PC-9 (cell line): ENCODE measurements at regions of chr12 and their contacts with region 1.

Region 1: GRCh38 chr12:77954206-77954555 is 123.5 kb downstream of the NAV3 start:
- DNase-seq: no peak
- H3K4me3 ChIP-seq: no peak overlapping the region
- H3K27ac ChIP-seq: no peak overlapping the region
- H3K4me1 ChIP-seq: no peaks in the 10 kb centered on the region
- H3K27me3 ChIP-seq: no peaks in the 10 kb centered on the region
- CTCF ChIP-seq: no peak

Region 2: DNA sequence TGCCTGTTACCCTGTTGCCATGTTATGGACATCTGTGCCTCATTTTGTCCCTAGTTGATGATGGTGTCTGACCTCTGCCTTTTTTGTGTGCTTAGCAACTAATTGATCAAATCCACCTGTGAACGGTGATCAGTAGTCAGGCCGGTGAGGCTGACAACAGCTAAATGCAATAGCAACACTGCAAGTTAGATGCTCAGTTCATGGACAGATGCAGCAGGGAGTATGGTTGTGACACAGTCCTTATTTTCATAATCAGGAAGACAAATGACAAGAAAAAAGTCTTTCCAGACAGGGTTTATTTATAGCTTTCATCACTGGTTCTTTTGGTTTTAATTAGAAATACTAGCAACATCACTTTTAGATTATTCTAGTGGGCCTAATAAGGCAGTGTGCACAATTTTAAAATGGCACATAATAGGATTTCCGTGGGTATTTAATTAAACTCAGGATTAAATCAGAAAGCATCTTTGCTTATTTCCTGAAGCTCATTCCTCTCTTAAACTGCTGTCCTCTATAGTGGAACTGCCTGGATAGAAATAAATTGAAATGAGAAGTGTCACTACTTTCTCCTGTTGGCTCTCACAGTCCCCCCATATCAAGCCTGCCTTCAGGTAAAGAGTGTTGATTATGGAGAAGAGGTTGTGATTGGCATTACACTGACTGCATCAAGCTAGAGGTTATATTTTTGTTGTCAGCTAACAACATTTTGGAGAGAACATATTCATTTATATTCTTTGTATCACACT is 404.6 kb before region 1 on chr12:
- CTCF ChIA-PET with region 1: no interaction called
- POLR2A ChIA-PET with region 1: interaction called, 14 read pairs
- intact Hi-C with region 1: no loop called
- DNase-seq: no peak
- H3K4me3 ChIP-seq: no peak overlapping the region
- H3K27ac ChIP-seq: no peak overlapping the region
- H3K4me1 ChIP-seq: no peaks in the 10 kb centered on the region
- H3K27me3 ChIP-seq: no peaks in the 10 kb centered on the region
- CTCF ChIP-seq: no peak

Region 3: GRCh38 chr12:77882709-77883108 is 71.5 kb before region 1 on chr12:
- CTCF ChIA-PET with region 1: no interaction called
- POLR2A ChIA-PET with region 1: interaction called, 12 read pairs
- intact Hi-C with region 1: no loop called
- DNase-seq: no peak
- H3K4me3 ChIP-seq: no peak overlapping the region
- H3K27ac ChIP-seq: no peak overlapping the region
- H3K4me1 ChIP-seq: no peaks in the 10 kb centered on the region
- H3K27me3 ChIP-seq: no peaks in the 10 kb centered on the region
- CTCF ChIP-seq: no peak

Region 4: GRCh38 chr12:77914081-77914488 is 40.1 kb before region 1 on chr12:
- CTCF ChIA-PET with region 1: no interaction called
- POLR2A ChIA-PET with region 1: no interaction called
- intact Hi-C with region 1: no loop called
- DNase-seq: no peak
- H3K4me3 ChIP-seq: no peak overlapping the region
- H3K27ac ChIP-seq: no peak overlapping the region
- H3K4me1 ChIP-seq: no peaks in the 10 kb centered on the region
- H3K27me3 ChIP-seq: no peaks in the 10 kb centered on the region
- CTCF ChIP-seq: no peak

Region 5: GRCh38 chr12:78385541-78385940 is 431.4 kb after region 1 on chr12:
- CTCF ChIA-PET with region 1: no interaction called
- POLR2A ChIA-PET with region 1: no interaction called
- intact Hi-C with region 1: no loop called
- DNase-seq: no peak
- H3K4me3 ChIP-seq: no peak overlapping the region
- H3K27ac ChIP-seq: no peak overlapping the region
- H3K4me1 ChIP-seq: no peaks in the 10 kb centered on the region
- H3K27me3 ChIP-seq: no peaks in the 10 kb centered on the region
- CTCF ChIP-seq: no peak